Left cardiac atrium (tissue), 4 donors: ENCODE measurements at regions of chr12 and their contacts with region 1.

Region 1: GRCh38 chr12:67977668-67978067 is 11.6 kb upstream of the IFNG-AS1 start:
- DNase-seq: no peak
- ATAC-seq: peak; percentile 23 to 74

Region 2: GRCh38 chr12:67433385-67434175 is 544.1 kb before region 1 on chr12:
- intact Hi-C with region 1: loop called in 1 of 2 experiments (anchors 10 kb)
- DNase-seq: no peak
- ATAC-seq: no peak